CD8-positive, alpha-beta T cell (primary cell): ENCODE measurements at regions of chr2 and their contacts with region 1.

Region 1: DNA sequence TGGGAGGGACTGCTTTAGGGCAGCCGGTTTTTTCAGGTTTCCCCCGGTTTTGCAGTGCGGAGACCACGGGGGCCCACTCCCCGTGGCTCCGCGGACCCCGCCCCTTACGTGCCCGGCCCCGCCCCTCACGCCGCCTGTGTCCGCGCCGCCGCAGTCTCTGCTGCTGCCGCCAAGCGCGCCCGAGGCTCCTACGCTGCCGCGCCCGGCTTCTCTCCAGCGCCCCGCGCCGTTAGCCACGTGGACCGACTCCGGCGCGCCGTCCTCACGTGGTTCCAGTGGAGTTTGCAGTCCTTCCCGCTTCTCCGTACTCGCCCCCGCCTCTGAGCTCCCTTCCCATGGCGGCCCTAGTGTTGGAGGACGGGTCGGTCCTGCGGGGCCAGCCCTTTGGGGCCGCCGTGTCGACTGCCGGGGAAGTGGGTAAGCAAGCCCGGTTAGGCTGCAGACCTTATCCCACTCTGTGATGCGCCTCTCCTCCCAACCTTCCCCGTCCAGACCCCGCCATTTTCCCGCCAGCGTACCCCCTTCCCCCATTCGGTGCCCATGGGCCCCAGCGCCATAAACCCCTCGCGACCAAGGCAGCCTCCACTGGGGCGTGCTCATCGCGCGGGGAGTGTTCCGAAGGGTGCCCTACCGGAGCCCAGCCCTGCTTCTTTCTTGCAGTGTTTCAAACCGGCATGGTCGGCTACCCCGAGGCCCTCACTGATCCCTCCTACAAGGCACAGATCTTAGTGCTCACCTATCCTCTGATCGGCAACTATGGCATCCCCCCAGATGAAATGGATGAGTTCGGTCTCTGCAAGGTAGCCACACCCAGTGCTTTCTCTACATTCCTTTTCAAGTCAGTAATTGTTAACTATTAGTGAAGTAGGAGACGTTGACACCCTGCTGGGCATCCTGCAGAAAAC is at the start of gene CAD:
- DNase-seq: peak; percentile 69 to 92 (median 85)
- ATAC-seq: peak; percentile 77
- H3K4me3 ChIP-seq: peak within 1 kb of the TSS; percentile 84
- H3K4me3 Mint-ChIP-seq: peak within 1 kb of the TSS; percentile 96
- H3K27ac ChIP-seq: peak within 1 kb of the TSS; percentile 66 to 78
- H3K27ac Mint-ChIP-seq: peak within 1 kb of the TSS; percentile 94
- H3K4me1 ChIP-seq: peaks cover 25% of the 10 kb centered on the region
- H3K4me1 Mint-ChIP-seq: peaks cover 45% of the 10 kb centered on the region
- H3K27me3 ChIP-seq: no peaks in the 10 kb centered on the region
- H3K27me3 Mint-ChIP-seq: no peaks in the 10 kb centered on the region
- CTCF ChIP-seq: no peak
- total RNA-seq, gene CAD: 24.7 to 31.4 TPM

Region 2: GRCh38 chr2:25982273-25982967 is 1235.0 kb before region 1 on chr2 and contains the start of gene KIF3C:
- CTCF ChIA-PET with region 1: no interaction called
- POLR2A ChIA-PET with region 1: no interaction called
- intact Hi-C with region 1: loop called in 1 of 2 experiments (anchors 10 kb)
- DNase-seq: peak; percentile 46 to 84 (median 76)
- ATAC-seq: peak; percentile 92
- H3K4me3 ChIP-seq: peak within 1 kb of the TSS; percentile 61 to 81
- H3K4me3 Mint-ChIP-seq: peak within 1 kb of the TSS; percentile 88
- H3K27ac ChIP-seq: peak within 1 kb of the TSS; percentile 26 to 28
- H3K27ac Mint-ChIP-seq: peak within 1 kb of the TSS; percentile 79
- H3K4me1 ChIP-seq: peaks cover 11% of the 10 kb centered on the region
- H3K4me1 Mint-ChIP-seq: peaks cover 17% of the 10 kb centered on the region
- H3K27me3 ChIP-seq: no peaks in the 10 kb centered on the region
- H3K27me3 Mint-ChIP-seq: no peaks in the 10 kb centered on the region
- CTCF ChIP-seq: no peak
- total RNA-seq, gene KIF3C: 1.5 to 2.3 TPM

Region 3: DNA sequence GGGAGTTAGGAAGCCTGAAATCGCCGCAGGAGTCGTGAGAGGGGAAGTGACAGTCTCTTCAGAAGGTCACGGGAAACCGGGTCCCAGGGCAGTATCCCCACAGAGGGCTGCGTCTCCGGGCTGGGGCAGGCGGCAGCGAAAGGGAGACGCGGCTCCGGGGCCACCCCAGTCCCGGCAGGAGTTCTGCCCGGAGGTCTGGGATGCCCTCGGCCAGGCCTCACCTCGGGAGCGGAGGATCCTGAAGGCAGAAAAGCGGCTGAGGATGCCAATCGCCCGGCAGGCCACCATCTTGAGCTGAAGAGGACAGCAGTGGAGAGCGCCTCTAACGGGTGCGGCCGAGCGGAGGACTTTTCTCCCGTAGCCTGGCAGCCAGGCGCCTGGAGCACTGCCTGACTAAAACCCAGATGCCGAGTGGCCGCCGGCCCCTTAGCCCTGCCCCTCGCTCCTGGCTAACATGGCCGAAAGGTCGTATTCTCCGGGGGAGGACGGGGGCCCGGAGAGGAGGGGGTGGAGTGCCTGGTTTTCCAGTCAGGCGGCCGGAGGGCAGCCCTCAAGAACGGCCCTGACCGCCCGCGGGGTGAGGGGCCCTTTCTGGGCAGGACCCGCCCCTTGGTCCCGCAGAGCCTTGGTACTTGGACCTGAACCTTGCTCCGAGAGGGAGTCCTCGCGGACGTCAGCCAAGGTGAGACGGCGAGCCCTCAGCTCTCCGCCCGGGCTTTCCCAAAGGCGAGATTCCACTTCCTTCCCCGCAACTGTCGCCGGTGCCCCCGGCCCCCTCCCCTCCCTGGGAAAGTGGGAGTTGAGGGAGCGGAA is 973.0 kb before region 1 on chr2 and contains the starts of genes HADHA and HADHB:
- CTCF ChIA-PET with region 1: no interaction called
- POLR2A ChIA-PET with region 1: no interaction called
- intact Hi-C with region 1: loop called in 1 of 2 experiments (anchors 10 kb)
- DNase-seq: peak; percentile 72 to 91 (median 84)
- ATAC-seq: peak; percentile 82
- H3K4me3 ChIP-seq: peak within 1 kb of the TSS; percentile 99
- H3K4me3 Mint-ChIP-seq: peak within 1 kb of the TSS; percentile 99
- H3K27ac ChIP-seq: peak within 1 kb of the TSS; percentile 99
- H3K27ac Mint-ChIP-seq: peak within 1 kb of the TSS; percentile 100
- H3K4me1 ChIP-seq: peaks cover 22% of the 10 kb centered on the region
- H3K4me1 Mint-ChIP-seq: peaks cover 60% of the 10 kb centered on the region
- H3K27me3 ChIP-seq: no peaks in the 10 kb centered on the region
- H3K27me3 Mint-ChIP-seq: no peaks in the 10 kb centered on the region
- CTCF ChIP-seq: no peak
- total RNA-seq, gene HADHA: 66.8 to 69.4 TPM
- total RNA-seq, gene HADHB: 26.0 to 26.1 TPM

Region 4: DNA sequence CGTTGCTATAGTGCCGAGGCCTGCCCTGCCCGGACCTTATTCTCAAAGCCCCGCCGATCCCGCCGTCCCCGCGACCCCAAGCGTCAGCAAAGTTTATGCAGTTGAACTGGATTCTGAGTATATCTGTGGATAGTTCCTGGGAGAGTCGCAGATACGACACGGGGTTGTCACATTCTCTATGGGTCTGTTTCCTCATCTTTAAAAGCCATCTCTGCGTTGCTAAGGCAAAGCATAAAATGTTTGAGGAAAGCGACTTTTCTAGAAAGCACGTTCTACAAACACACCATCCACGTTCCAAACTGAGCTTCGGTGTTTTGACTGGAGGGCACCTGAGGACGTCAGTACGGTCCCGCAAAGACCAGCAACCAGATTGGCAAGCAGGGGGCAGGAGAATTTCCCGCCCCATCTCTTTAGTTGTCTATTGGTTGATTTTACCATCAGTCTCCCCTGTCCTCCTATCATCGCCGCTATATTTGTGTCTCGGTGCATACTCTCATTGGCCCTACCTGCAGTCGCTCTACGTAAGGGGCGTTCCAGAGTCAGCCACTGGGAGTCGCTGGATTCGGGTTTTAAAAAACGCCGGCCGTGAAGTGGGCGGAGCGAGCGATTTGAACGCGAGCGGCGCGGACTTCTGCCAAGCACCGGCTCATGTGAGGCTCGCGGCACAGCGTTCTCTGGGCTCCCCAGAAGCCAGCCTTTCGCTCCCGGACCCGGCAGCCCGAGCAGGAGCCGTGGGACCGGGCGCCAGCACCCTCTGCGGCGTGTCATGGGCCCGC is 431.9 kb before region 1 on chr2 and contains the start of gene CENPA:
- CTCF ChIA-PET with region 1: no interaction called
- POLR2A ChIA-PET with region 1: no interaction called
- intact Hi-C with region 1: loop called in 1 of 2 experiments (anchors 10 kb)
- DNase-seq: peak; percentile 92 to 99 (median 94)
- ATAC-seq: peak; percentile 99
- H3K4me3 ChIP-seq: peak within 1 kb of the TSS; percentile 52 to 63
- H3K4me3 Mint-ChIP-seq: peak within 1 kb of the TSS; percentile 84
- H3K27ac ChIP-seq: peak within 1 kb of the TSS; percentile 58 to 61
- H3K27ac Mint-ChIP-seq: peak within 1 kb of the TSS; percentile 88
- H3K4me1 ChIP-seq: peaks cover 16% of the 10 kb centered on the region
- H3K4me1 Mint-ChIP-seq: peaks cover 12% of the 10 kb centered on the region
- H3K27me3 ChIP-seq: no peaks in the 10 kb centered on the region
- H3K27me3 Mint-ChIP-seq: peaks cover 11% of the 10 kb centered on the region
- CTCF ChIP-seq: no peak
- total RNA-seq, gene CENPA: 0.39 to 0.62 TPM

Region 5: GRCh38 chr2:27071277-27071989 is 146.0 kb before region 1 on chr2 and contains the start of gene OST4:
- CTCF ChIA-PET with region 1: no interaction called
- POLR2A ChIA-PET with region 1: no interaction called
- intact Hi-C with region 1: loop called (anchors 2 to 5 kb)
- DNase-seq: peak; percentile 74 to 94 (median 88)
- ATAC-seq: peak; percentile 88
- H3K4me3 ChIP-seq: peak within 1 kb of the TSS; percentile 84 to 93
- H3K4me3 Mint-ChIP-seq: peak within 1 kb of the TSS; percentile 98
- H3K27ac ChIP-seq: peak within 1 kb of the TSS; percentile 92 to 98
- H3K27ac Mint-ChIP-seq: peak within 1 kb of the TSS; percentile 98
- H3K4me1 ChIP-seq: peaks cover 46% of the 10 kb centered on the region
- H3K4me1 Mint-ChIP-seq: peaks cover 76% of the 10 kb centered on the region
- H3K27me3 ChIP-seq: no peaks in the 10 kb centered on the region
- H3K27me3 Mint-ChIP-seq: no peaks in the 10 kb centered on the region
- CTCF ChIP-seq: no peak
- total RNA-seq, gene OST4: 252 to 260 TPM

Region 6: DNA sequence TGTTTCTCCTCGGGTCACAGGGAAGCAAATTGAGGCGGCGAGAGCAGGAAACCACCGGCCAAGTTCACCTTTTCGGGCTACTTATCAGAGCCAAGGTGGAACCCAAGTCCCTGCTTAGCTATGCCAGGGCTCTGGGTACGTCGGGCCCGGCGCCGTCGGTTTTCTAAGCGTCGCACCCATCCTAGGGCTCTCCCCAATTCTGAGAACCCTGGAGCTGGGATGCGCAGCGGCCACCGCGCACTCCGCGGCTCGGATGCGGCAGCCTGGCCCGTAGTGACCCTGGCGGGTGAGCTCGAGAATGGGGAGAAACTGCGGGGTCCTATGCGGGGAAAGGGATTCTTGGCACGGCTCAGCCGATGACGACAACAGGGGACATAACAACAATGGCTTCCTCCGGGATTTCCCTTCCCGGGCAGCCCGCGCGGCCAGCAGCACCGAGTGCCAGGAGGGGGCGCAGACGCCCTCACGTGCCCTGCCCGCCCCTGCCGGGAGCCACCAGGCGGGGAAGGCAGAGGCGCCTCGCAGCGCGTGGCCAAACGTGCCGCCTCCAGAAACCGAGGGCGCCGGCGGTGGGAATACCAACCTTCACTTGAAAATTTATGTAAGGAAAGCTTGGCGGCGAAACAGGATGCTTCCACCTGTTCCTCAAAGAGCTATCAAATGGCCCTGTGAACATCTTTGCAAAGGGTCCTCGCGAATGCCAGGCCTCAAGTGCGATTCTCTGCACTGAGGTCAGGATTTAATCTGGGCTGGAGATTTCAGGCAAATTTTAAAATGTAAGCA is 47.5 kb after region 1 on chr2:
- CTCF ChIA-PET with region 1: interaction called, 3 read pairs
- POLR2A ChIA-PET with region 1: no interaction called
- intact Hi-C with region 1: loop called in 1 of 2 experiments (anchors 1 kb)
- DNase-seq: peak; percentile 34 to 89 (median 64)
- ATAC-seq: peak; percentile 66
- H3K4me3 ChIP-seq: peak overlapping the region; percentile 48 to 55
- H3K4me3 Mint-ChIP-seq: peak overlapping the region; percentile 77
- H3K27ac ChIP-seq: no peak overlapping the region
- H3K27ac Mint-ChIP-seq: no peak overlapping the region
- H3K4me1 ChIP-seq: peaks cover 24% of the 10 kb centered on the region
- H3K4me1 Mint-ChIP-seq: peaks cover 26% of the 10 kb centered on the region
- H3K27me3 ChIP-seq: peaks cover 26 to 34% of the 10 kb centered on the region in 2 experiments
- H3K27me3 Mint-ChIP-seq: peaks cover 38% of the 10 kb centered on the region
- CTCF ChIP-seq: peak; percentile 54

Region 7: DNA sequence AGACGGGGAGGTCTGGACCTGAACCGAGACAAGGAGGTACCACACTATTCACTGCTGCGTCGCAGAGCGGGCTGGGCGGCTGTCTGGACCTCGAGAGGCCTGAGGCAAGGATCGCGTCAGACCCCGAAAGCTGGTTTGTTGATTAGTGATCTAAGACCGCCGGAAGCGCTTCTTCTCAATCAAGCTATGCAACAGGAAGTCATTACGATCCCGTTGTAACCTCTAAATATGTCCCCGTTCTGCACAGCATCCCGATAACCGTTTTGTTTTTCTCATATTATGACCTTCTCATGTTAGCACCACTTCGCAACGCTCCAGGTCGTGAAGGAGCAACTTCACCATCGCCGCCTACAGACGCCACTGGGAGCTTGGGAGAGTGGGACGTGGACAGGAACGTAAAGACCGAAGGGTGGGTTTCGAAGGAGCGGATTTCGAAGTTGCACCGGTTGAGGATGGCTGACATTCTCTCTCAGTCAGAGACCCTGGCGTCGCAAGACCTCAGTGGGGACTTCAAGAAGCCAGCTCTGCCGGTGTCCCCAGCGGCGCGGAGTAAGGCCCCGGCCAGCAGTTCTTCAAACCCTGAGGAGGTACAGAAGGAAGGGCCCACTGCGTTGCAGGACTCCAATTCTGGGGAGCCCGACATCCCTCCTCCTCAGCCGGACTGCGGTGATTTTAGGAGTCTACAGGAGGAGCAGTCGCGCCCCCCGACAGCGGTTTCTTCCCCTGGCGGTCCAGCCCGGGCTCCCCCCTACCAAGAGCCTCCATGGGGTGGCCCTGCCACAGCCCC is 446.2 kb after region 1 on chr2 and contains the starts of genes SLC4A1AP and SUPT7L:
- CTCF ChIA-PET with region 1: no interaction called
- POLR2A ChIA-PET with region 1: no interaction called
- intact Hi-C with region 1: loop called in 1 of 2 experiments (anchors 10 kb)
- DNase-seq: peak; percentile 54 to 90 (median 74)
- ATAC-seq: peak; percentile 81
- H3K4me3 ChIP-seq: peak within 1 kb of the TSS; percentile 96 to 99
- H3K4me3 Mint-ChIP-seq: peak within 1 kb of the TSS; percentile 100
- H3K27ac ChIP-seq: peak within 1 kb of the TSS; percentile 95 to 98
- H3K27ac Mint-ChIP-seq: peak within 1 kb of the TSS; percentile 100
- H3K4me1 ChIP-seq: peaks cover 28% of the 10 kb centered on the region
- H3K4me1 Mint-ChIP-seq: peaks cover 60% of the 10 kb centered on the region
- H3K27me3 ChIP-seq: no peaks in the 10 kb centered on the region
- H3K27me3 Mint-ChIP-seq: no peaks in the 10 kb centered on the region
- CTCF ChIP-seq: no peak
- total RNA-seq, gene SLC4A1AP: 21.4 to 22.8 TPM
- total RNA-seq, gene SUPT7L: 54.0 to 55.5 TPM